Natural killer cell (primary cell): ENCODE measurements at regions of chrX and their contacts with region 1.

Region 1: DNA sequence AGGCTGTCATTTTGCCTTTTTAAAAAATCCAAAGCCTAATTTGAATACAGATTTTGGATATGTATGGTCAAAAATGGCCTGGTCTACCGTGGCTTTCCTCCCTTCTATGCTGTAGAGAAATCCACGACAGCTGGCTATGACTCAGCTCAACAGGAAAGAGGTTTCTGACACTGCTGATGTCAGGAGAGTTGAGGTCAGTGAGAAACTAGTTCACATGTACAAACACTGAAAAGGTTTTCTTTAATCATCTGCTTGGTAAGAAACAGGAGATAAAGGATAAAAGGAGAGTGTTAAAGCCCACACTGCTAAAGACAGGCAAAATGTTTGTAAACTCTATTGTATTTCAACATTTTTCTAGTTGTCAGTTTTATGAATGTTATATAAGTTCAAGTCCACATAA is 113.9 kb downstream of the NYX start:
- DNase-seq: peak in 1 of 2 donors; percentile 65
- ATAC-seq: peak; percentile 80 to 90 (median 82)
- H3K4me3 ChIP-seq: no peak overlapping the region
- H3K4me3 Mint-ChIP-seq: peak overlapping the region; percentile 48
- H3K27ac ChIP-seq: peak overlapping the region; percentile 29
- H3K27ac Mint-ChIP-seq: peak overlapping the region; percentile 49 to 78
- H3K4me1 ChIP-seq: peaks cover 15% of the 10 kb centered on the region
- H3K4me1 Mint-ChIP-seq: peaks cover 22 to 28% of the 10 kb centered on the region in 2 donors
- H3K27me3 ChIP-seq: no peaks in the 10 kb centered on the region
- H3K27me3 Mint-ChIP-seq: no peaks in the 10 kb centered on the region
- CTCF ChIP-seq: no peak

Region 2: DNA sequence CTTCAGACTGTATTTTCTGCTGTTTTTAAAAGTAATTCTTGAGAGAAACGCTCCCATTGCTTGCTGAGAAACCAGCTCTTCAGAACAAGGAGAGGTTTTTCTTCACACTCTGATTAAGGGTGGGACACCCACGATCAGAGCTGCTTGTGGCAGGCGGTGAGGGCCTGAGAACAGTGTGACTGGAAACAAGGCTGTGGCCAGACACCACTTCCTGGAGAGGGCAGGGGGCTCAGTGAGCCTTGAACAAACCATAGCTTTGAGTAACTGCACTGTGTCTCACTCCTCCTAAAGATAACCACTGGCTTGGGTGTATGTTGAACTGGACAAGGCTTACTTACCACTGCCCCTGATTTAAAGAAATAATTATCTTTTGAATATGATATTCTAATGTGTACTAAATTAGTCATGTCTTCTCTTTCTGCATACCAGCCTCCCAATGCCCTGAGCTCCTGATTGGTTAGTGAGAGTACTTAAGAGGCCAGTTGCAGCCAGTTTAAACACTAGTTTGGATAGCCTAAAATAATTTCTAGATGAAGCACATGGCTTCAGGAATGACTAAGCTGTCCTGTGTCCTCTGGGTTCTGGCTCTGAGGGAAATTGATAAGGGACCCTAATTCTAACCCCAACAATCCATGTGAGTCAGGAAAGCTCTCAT is 159.2 kb after region 1 on chrX:
- intact Hi-C with region 1: loop called (anchors 1 kb)
- DNase-seq: peak; percentile 53 to 60
- ATAC-seq: peak; percentile 85 to 99 (median 95)
- H3K4me3 ChIP-seq: no peak overlapping the region
- H3K4me3 Mint-ChIP-seq: peak overlapping the region; percentile 64
- H3K27ac ChIP-seq: peak overlapping the region; percentile 61
- H3K27ac Mint-ChIP-seq: peak overlapping the region; percentile 63 to 78
- H3K4me1 ChIP-seq: peaks cover 42% of the 10 kb centered on the region
- H3K4me1 Mint-ChIP-seq: peaks cover 41 to 55% of the 10 kb centered on the region in 2 donors
- H3K27me3 ChIP-seq: no peaks in the 10 kb centered on the region
- H3K27me3 Mint-ChIP-seq: peaks cover 9 to 25% of the 10 kb centered on the region in 2 donors
- CTCF ChIP-seq: no peak

Region 3: DNA sequence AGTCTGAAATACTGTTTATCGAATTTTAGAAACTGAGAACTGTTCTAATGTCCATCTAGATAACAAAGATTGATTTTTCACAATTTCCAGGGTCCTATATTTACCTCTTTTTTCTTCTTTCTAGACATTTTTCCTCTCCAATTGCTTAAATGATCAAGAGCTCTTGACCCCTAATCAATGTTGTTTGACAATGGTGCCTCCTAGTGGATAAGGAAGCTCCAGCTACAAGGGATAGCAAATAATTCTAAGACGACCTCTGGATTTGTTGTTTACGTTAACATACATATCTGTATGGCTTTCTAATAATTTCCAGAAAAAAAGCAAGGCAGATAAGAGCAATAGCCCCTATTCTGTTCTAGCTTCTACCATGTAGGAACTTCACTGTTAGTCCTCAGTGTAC is 198.8 kb after region 1 on chrX:
- intact Hi-C with region 1: loop called (anchors 1 kb)
- DNase-seq: peak in 1 of 2 donors; percentile 47
- ATAC-seq: peak in 2 of 3 donors; percentile 46 to 59
- H3K4me3 ChIP-seq: no peak overlapping the region
- H3K4me3 Mint-ChIP-seq: no peak overlapping the region
- H3K27ac ChIP-seq: no peak overlapping the region
- H3K27ac Mint-ChIP-seq: no peak overlapping the region
- H3K4me1 ChIP-seq: no peaks in the 10 kb centered on the region
- H3K4me1 Mint-ChIP-seq: peaks cover 5 to 6% of the 10 kb centered on the region in 2 donors
- H3K27me3 ChIP-seq: no peaks in the 10 kb centered on the region
- H3K27me3 Mint-ChIP-seq: peaks cover 5 to 36% of the 10 kb centered on the region in 2 donors
- CTCF ChIP-seq: peak; percentile 63